Prostate gland (tissue), 2 donors: ENCODE measurements at regions of chr2 and their contacts with region 1.

Region 1: DNA sequence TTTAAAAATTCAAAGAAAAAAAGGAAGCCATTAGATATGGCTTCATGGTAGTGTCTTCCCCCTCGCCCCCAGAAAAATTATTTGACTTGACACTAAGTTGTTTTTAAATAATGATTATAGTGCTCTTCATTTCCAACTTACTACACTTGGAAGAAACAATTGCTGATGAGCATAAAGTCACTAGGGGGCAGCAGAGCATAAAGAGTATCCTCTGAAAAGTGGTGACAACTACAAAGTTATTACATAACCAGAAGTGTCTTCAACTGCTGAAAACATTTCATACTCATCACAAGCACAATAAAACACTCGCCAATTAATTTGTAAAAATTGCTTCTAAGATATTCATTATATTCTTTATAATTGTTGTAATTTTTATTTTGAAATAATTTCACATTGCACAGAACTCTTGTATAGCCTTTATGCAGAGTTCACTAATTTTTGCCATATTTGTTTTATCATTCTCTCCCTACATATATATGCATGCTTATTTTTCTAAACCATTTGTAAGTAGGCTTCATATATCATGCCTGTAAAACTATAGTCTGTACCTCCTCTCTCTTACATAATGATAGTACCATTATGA is 54.9 kb downstream of the EXOC6B start:
- DNase-seq: peak; percentile 74
- H3K4me3 ChIP-seq: no peak overlapping the region
- H3K27ac ChIP-seq: no peak overlapping the region
- H3K4me1 ChIP-seq: no peaks in the 10 kb centered on the region
- H3K27me3 ChIP-seq: no peaks in the 10 kb centered on the region
- CTCF ChIP-seq: peak; percentile 68 to 89 (median 86)
- POLR2A ChIP-seq: no peak

Region 2: GRCh38 chr2:72862239-72862988 is 91.4 kb after region 1 on chr2:
- intact Hi-C with region 1: loop called (anchors 2 kb)
- DNase-seq: peak; percentile 84
- H3K4me3 ChIP-seq: no peak overlapping the region
- H3K27ac ChIP-seq: no peak overlapping the region
- H3K4me1 ChIP-seq: no peaks in the 10 kb centered on the region
- H3K27me3 ChIP-seq: peaks cover 2% of the 10 kb centered on the region
- CTCF ChIP-seq: peak; percentile 81 to 94 (median 90)
- POLR2A ChIP-seq: no peak

Region 3: DNA sequence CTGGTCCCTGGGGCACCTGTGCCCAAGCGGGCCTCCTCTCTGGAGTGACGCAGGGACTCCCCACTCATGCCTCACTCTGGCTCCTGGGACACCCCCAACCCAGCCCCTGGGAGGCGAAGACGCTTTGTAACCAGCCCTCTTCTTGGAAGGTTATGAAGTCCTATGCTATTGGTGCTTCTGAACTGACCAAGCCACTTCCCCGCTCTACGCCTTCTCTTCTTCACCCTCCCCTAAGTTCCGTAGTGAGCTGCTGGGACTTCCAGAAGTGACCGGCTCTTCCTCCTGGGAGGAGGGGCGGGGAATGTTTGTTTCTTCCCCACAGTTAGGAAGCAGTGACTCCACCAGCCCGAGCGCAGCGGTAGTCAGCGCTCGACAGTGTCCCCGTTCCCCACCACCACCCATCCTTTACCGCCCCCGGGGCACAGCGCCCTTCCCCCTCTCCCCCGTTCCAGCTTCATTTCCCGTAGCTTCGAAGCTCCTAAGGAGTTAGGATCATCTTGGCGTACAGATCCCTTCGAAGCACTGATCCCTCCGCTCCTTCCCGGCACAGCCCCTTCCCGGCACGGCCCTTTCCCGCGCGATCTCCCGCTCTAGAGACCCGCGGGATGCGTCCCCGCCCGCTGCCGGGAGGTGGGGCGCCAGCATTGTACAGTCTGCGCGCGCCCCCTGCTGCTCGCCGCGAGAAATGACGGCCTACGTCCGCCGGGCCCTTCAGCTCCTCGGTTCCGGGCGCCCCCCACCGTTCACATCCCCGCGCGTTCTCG is 406.1 kb after region 1 on chr2:
- intact Hi-C with region 1: loop called (anchors 10 kb)
- DNase-seq: peak; percentile 86
- H3K4me3 ChIP-seq: peak overlapping the region; percentile 49 to 50
- H3K27ac ChIP-seq: peak overlapping the region; percentile 62 to 67
- H3K4me1 ChIP-seq: peaks cover 9% of the 10 kb centered on the region
- H3K27me3 ChIP-seq: no peaks in the 10 kb centered on the region
- CTCF ChIP-seq: peak; percentile 92 to 98 (median 98)
- POLR2A ChIP-seq: no peak